Activated CD8-positive, alpha-beta T cell treated with anti-CD3 and anti-CD28 coated beads for 36 hours (primary cell): ENCODE measurements at regions of chr7 and their contacts with region 1.

Region 1: GRCh38 chr7:134357492-134357891 is 40.8 kb upstream of the SLC35B4 start:
- DNase-seq: no peak
- ATAC-seq: peak; percentile 47
- H3K4me3 Mint-ChIP-seq: no peak overlapping the region
- H3K27ac Mint-ChIP-seq: no peak overlapping the region
- H3K4me1 Mint-ChIP-seq: no peaks in the 10 kb centered on the region
- H3K27me3 Mint-ChIP-seq: peaks cover 5% of the 10 kb centered on the region
- CTCF ChIP-seq: no peak

Region 2: GRCh38 chr7:134302120-134302519 is 55.4 kb before region 1 on chr7:
- CTCF ChIA-PET with region 1: no interaction called
- POLR2A ChIA-PET with region 1: no interaction called
- intact Hi-C with region 1: no loop called
- DNase-seq: no peak
- ATAC-seq: no peak
- H3K4me3 Mint-ChIP-seq: no peak overlapping the region
- H3K27ac Mint-ChIP-seq: no peak overlapping the region
- H3K4me1 Mint-ChIP-seq: no peaks in the 10 kb centered on the region
- H3K27me3 Mint-ChIP-seq: no peaks in the 10 kb centered on the region
- CTCF ChIP-seq: no peak

Region 3: GRCh38 chr7:134316539-134317344 is 40.8 kb before region 1 on chr7 and contains the start of gene SLC35B4:
- CTCF ChIA-PET with region 1: interaction called, 10 read pairs
- POLR2A ChIA-PET with region 1: no interaction called
- intact Hi-C with region 1: no loop called
- DNase-seq: peak; percentile 98
- ATAC-seq: peak; percentile 99
- H3K4me3 Mint-ChIP-seq: peak within 1 kb of the TSS; percentile 86
- H3K27ac Mint-ChIP-seq: peak within 1 kb of the TSS; percentile 87
- H3K4me1 Mint-ChIP-seq: peaks cover 20% of the 10 kb centered on the region
- H3K27me3 Mint-ChIP-seq: no peaks in the 10 kb centered on the region
- CTCF ChIP-seq: peak; percentile 7
- total RNA-seq, gene SLC35B4: 11.7 to 13.7 TPM